Adrenal gland (tissue), 19 donors: ENCODE measurements at regions of chr3 and their contacts with region 1.

Region 1: DNA sequence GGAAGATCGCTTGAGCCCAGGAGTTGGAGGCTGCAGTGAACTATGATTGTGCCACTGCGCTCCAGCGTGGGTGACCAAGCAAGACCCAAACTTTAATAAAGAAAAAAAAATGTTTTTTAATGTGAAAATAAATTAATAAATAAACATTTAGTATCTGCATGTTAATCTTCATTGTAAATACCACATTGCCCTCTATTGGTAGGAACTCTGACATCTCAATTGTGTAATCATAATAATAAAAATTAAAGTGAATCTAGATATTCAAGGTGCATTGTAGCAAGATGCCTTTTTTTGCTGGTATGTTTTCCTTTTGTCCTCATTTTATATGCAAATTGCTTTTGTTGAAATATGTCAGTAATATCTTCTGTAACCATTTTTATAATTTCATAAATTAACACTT is 95.0 kb upstream of the LIMD1 start:
- DNase-seq: no peak
- H3K4me3 ChIP-seq: no peak overlapping the region
- H3K27ac ChIP-seq: no peak overlapping the region
- H3K4me1 ChIP-seq: peaks cover 0 to 7% of the 10 kb centered on the region in 2 donors
- H3K27me3 ChIP-seq: no peaks in the 10 kb centered on the region
- CTCF ChIP-seq: peak in 5 of 6 experiments; percentile 54 to 81 (median 67)
- POLR2A ChIP-seq: no peak

Region 2: GRCh38 chr3:45043728-45044299 is 455.7 kb before region 1 on chr3:
- intact Hi-C with region 1: loop called (anchors 5 kb)
- DNase-seq: no peak
- H3K4me3 ChIP-seq: no peak overlapping the region
- H3K27ac ChIP-seq: peak overlapping the region in 1 of 5 donors; percentile 52
- H3K4me1 ChIP-seq: no peaks in the 10 kb centered on the region
- H3K27me3 ChIP-seq: no peaks in the 10 kb centered on the region
- CTCF ChIP-seq: no peak
- POLR2A ChIP-seq: no peak

Region 3: DNA sequence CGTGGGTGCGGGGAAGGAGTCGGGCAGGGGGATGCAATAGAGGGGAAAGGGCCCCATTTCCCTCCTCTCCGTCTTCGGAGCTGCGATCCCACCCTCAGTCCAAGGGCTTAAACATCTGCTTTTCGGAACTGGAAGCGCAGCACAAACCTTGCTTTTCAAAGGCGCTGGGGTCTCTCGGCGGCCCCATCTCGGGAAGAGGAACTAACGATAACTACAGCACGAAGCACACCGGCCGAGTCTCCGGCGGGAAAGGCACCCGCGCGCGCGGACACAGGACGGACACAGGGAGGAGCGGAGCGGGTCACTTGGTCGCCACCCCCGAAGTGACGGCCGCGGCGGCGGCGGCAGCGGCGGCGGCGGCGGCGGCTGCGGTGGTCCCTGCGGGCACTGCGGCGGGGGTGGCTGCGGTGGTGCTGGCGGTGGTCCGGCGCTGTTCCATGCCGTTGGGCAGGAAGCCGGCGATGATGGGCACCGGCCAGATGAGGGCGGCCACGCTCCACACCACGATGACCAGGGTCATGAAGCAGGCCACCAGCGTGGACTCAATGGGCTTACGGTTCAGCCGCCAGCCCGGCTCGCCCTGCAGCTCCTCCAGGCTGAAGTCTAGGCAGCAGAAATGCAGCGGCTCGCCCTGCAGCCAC is 274.6 kb before region 1 on chr3:
- intact Hi-C with region 1: loop called (anchors 2 to 5 kb)
- DNase-seq: peak; percentile 78 to 90 (median 83)
- H3K4me3 ChIP-seq: peak overlapping the region in 2 of 4 donors; percentile 32 to 95
- H3K27ac ChIP-seq: peak overlapping the region in 1 of 5 donors; percentile 71
- H3K4me1 ChIP-seq: peaks cover 0 to 10% of the 10 kb centered on the region in 2 donors
- H3K27me3 ChIP-seq: no peaks in the 10 kb centered on the region
- CTCF ChIP-seq: peak in 5 of 6 experiments; percentile 37 to 74 (median 51)
- POLR2A ChIP-seq: no peak

Region 4: GRCh38 chr3:45234250-45234649 is 265.3 kb before region 1 on chr3:
- intact Hi-C with region 1: loop called in 1 of 2 experiments (anchors 5 kb)
- DNase-seq: no peak
- H3K4me3 ChIP-seq: no peak overlapping the region
- H3K27ac ChIP-seq: no peak overlapping the region
- H3K4me1 ChIP-seq: no peaks in the 10 kb centered on the region
- H3K27me3 ChIP-seq: no peaks in the 10 kb centered on the region
- CTCF ChIP-seq: no peak
- POLR2A ChIP-seq: no peak

Region 5: DNA sequence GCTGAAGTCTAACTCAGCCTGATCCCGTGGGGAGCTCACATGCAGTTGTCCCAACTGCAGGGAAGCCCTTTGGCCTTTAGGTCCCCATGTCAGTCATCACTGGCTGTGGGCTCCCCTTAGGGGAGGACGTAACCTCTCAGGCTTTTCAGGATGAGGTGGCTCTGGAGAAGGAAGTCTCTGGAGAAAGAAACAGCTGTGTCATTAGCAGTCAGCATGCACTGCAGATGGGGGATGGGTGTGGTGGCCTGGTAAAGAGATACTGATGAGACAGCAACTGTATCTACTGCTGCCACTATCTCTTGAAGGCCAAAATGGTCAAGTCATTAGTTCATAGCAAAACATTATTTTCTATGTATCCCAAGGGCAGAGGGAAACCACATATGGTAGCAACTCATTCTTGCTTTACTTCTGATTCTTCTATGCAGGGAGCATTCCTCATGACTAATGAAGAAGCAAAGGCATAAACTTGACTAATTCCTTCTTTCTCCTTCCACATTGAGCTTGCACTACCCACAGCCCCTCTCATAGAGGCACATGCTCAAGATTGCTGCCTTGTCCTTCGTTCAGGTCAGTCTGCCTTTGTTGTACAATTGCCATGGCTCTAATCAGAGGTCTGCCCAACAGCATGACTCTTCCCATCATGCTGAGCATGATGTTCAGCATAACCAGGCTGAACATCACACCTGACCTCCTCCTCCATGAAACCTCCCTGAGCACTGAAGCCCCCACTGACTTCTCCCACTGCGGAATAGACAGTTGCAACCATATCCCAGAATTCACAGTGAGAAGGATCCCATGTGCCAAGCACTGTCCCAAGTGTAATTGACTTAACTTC is 225.6 kb before region 1 on chr3:
- intact Hi-C with region 1: no loop called
- DNase-seq: peak in 1 of 7 donors; percentile 5
- H3K4me3 ChIP-seq: no peak overlapping the region
- H3K27ac ChIP-seq: no peak overlapping the region
- H3K4me1 ChIP-seq: no peaks in the 10 kb centered on the region
- H3K27me3 ChIP-seq: no peaks in the 10 kb centered on the region
- CTCF ChIP-seq: no peak
- POLR2A ChIP-seq: no peak

Region 6: DNA sequence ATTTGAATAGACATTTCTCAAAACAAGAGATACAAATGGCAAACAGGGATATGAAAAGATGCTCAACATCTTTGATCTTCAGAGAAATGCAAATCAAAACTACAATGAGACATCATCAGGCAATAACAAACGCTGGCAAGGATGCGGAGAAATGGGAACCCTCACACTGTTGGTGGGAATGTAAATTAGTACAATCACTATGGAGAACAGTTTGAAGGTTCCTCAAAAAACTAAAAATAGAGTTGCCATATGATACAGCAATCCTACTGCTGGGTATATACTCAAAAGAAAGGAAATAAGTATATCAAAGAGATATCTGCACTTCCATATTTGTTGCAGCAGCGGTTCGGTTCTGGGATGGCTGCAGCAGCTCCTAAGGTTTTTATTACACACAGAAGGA is 127.9 kb before region 1 on chr3:
- intact Hi-C with region 1: no loop called
- DNase-seq: no peak
- H3K4me3 ChIP-seq: no peak overlapping the region
- H3K27ac ChIP-seq: no peak overlapping the region
- H3K4me1 ChIP-seq: no peaks in the 10 kb centered on the region
- H3K27me3 ChIP-seq: no peaks in the 10 kb centered on the region
- CTCF ChIP-seq: no peak
- POLR2A ChIP-seq: no peak

Region 7: DNA sequence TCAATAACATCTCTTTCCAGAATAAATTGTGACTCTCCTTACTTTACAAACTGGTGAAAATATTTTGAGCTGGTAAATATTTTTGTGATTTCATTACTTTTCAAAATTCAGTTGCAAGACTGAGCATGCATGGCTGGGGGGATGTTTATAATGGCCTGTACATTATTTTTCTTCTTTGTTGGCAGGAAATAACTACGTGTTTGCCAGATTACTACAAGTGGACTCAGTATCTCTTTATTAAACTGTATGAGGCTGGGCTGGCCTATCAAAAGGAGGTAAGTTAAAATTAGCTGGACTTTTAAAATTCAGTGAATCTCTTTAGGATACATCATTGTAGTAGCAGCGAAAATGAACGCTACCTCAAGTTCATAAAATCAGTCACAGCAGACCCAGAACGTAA is 52.8 kb before region 1 on chr3:
- intact Hi-C with region 1: no loop called
- DNase-seq: no peak
- H3K4me3 ChIP-seq: no peak overlapping the region
- H3K27ac ChIP-seq: no peak overlapping the region
- H3K4me1 ChIP-seq: no peaks in the 10 kb centered on the region
- H3K27me3 ChIP-seq: no peaks in the 10 kb centered on the region
- CTCF ChIP-seq: no peak
- POLR2A ChIP-seq: no peak

Region 8: DNA sequence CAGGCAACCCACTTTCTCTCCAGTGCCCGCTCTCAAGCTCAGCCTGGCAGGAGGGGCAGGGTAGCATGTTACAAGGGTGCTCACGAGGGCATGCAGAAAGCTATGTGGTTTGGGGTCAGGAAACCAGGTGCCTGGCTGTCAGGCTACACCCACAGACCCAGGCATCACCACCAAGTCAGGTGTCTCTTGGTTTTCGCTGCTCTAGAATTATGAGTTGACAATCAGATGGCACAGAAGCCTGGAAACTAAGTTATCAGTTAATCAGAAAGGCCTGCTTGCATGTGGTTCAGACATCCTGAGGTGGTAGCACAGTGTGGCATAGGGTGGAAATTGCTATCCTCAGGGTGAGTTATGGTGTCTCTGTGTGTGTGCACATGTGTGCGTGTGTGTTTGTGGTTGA is 370.6 kb after region 1 on chr3:
- intact Hi-C with region 1: no loop called
- DNase-seq: no peak
- H3K4me3 ChIP-seq: no peak overlapping the region
- H3K27ac ChIP-seq: no peak overlapping the region
- H3K4me1 ChIP-seq: no peaks in the 10 kb centered on the region
- H3K27me3 ChIP-seq: no peaks in the 10 kb centered on the region
- CTCF ChIP-seq: no peak
- POLR2A ChIP-seq: no peak